Brain microvascular endothelial cell (primary cell): ENCODE measurements at regions of chr4 and their contacts with region 1.

Region 1: GRCh38 chr4:1113311-1114009 is at the start of gene RNF212:
- DNase-seq: no peak
- H3K4me3 ChIP-seq: no peak within 1 kb of the TSS
- H3K27ac ChIP-seq: no peak within 1 kb of the TSS
- H3K27me3 ChIP-seq: peaks cover 12% of the 10 kb centered on the region
- CTCF ChIP-seq: no peak

Region 2: GRCh38 chr4:973431-974397 is 139.7 kb before region 1 on chr4 and contains the start of gene DGKQ:
- in situ Hi-C with region 1: no loop called
- DNase-seq: peak; percentile 52
- H3K4me3 ChIP-seq: peak within 1 kb of the TSS; percentile 64
- H3K27ac ChIP-seq: no peak within 1 kb of the TSS
- H3K27me3 ChIP-seq: no peaks in the 10 kb centered on the region
- CTCF ChIP-seq: no peak

Region 3: GRCh38 chr4:1055721-1056590 is 57.5 kb before region 1 on chr4:
- in situ Hi-C with region 1: loop called (anchors 10 kb)
- DNase-seq: no peak
- H3K4me3 ChIP-seq: no peak overlapping the region
- H3K27ac ChIP-seq: no peak overlapping the region
- H3K27me3 ChIP-seq: peaks cover 42% of the 10 kb centered on the region
- CTCF ChIP-seq: no peak

Region 4: GRCh38 chr4:1249148-1249730 is 135.8 kb after region 1 on chr4:
- in situ Hi-C with region 1: no loop called
- DNase-seq: peak; percentile 45
- H3K4me3 ChIP-seq: peak overlapping the region; percentile 56
- H3K27ac ChIP-seq: peak overlapping the region; percentile 68
- H3K27me3 ChIP-seq: no peaks in the 10 kb centered on the region
- CTCF ChIP-seq: no peak

Region 5: DNA sequence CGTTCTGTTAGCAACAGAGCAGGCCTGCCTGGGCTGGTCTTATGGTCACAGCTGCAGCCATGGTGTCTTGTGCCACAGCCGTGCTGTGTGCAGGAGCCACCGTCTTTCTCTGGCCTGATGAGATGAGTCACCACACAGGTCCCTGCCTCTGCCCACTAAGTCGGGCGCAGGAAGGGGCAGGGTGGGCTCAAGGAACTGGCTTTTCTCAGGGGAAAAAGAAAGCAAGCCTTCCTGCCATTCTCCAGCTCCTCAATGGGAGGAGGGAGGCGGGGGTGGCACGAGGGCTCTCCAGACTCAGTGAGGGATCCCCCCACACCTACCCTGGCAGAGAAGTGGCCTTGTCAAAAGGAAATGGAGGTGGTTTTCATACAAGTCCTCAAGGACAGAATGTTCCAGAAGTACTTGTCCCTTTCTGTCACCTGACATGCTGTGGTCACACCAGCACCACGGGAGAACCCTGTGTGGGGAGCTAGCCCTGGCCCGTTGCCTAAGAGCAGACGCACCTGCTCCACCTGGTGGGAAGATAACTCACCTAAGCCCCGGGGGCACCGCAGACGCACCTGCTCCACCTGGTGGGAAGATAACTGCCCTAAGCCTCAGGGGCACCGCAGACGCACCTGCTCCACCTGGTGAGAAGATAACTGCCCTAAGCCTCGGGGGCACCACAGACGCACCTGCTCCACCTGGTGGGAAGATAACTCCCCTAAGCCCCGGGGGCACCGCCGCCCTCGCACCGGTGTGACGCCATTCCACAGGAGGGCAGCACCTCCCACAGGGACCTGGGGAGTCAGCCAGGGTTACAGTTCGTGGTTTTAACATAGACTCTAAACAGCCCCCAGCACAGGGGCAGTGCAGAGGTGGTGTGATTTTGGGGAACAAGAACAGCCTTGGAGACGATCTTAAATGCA is 252.1 kb after region 1 on chr4:
- in situ Hi-C with region 1: no loop called
- DNase-seq: no peak
- H3K4me3 ChIP-seq: no peak overlapping the region
- H3K27ac ChIP-seq: no peak overlapping the region
- H3K27me3 ChIP-seq: no peaks in the 10 kb centered on the region
- CTCF ChIP-seq: peak; percentile 11